ENCODE measurements at regions of chr1 and their contacts with region 1.

Region 1: DNA sequence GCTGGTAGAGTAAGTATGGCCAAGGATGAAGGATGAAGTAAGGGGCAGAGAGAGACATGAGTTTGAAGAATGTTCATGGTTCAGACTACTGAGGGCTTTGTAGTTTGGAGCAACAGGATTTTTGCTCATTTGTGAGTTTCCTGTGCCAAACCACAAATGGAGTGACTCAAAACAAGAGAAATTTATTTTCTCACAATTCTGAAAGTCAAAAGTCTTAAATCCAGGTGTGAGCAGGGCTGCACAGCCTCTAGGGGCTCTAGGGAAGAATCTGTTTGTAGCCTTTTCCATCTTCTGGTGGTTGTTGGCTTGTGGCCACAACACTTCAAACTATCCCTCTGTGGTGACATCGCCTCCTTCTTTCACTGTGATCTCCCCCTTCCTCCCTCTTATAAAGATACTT is 58.9 kb downstream of the RHOU start:
- DNase-seq: peak; percentile 52
- H3K4me3 Mint-ChIP-seq: no peak overlapping the region
- H3K27ac Mint-ChIP-seq: no peak overlapping the region
- H3K4me1 Mint-ChIP-seq: peaks cover 9% of the 10 kb centered on the region
- H3K27me3 Mint-ChIP-seq: no peaks in the 10 kb centered on the region

Region 2: DNA sequence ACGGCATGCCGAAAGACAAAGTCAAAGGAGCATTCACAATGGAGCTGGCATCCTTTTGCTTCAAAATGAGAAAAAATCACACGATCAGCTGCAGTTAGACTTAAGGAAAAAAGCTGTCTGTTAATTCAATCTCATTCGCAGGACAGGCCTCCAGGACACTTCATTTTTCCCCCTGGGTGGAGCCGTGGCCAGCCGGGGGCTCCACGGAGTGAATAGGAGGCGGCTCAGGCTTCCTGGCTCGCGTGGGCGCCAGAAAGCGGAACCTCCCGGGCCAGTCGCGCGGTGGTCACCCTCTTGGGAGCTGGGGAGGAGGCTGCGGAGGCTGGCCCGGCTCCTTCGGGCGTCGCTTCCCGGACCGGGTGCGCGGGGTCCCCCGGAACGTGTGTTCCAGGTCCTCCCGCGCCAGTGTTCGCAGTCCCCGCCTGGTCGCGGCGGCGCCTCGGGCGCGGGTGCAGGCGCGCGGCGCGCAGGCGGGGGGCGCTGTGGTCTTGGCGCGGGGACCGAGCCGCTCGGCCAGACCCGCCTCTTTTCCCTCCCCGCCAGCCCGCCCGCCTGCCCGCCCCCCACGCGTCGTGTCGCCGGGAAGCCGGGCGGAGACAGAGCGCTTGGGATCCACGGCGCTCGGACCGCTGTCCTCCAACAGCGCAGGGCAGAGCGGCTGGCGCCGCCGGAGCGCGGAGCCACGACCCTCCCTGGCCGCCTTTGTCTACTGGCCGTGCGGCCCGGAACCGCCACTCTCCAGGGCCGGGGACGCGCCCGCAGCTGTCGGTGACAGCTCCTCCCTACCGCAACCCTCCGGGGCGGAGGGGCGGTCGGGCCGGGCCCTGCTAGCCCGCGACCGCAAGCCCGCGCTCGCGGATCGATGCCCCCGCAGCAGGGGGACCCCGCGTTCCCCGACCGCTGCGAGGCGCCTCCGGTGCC is 59.0 kb before region 1 on chr1 and contains the start of gene RHOU:
- CTCF ChIA-PET with region 1: interaction called, 10 read pairs
- POLR2A ChIA-PET with region 1: no interaction called
- intact Hi-C with region 1: loop called (anchors 1 kb)
- DNase-seq: peak; percentile 74
- H3K4me3 Mint-ChIP-seq: peak within 1 kb of the TSS; percentile 77
- H3K27ac Mint-ChIP-seq: no peak within 1 kb of the TSS
- H3K4me1 Mint-ChIP-seq: peaks cover 20% of the 10 kb centered on the region
- H3K27me3 Mint-ChIP-seq: peaks cover 9% of the 10 kb centered on the region
- total RNA-seq, gene RHOU: 0.57 to 0.68 TPM

Region 3: DNA sequence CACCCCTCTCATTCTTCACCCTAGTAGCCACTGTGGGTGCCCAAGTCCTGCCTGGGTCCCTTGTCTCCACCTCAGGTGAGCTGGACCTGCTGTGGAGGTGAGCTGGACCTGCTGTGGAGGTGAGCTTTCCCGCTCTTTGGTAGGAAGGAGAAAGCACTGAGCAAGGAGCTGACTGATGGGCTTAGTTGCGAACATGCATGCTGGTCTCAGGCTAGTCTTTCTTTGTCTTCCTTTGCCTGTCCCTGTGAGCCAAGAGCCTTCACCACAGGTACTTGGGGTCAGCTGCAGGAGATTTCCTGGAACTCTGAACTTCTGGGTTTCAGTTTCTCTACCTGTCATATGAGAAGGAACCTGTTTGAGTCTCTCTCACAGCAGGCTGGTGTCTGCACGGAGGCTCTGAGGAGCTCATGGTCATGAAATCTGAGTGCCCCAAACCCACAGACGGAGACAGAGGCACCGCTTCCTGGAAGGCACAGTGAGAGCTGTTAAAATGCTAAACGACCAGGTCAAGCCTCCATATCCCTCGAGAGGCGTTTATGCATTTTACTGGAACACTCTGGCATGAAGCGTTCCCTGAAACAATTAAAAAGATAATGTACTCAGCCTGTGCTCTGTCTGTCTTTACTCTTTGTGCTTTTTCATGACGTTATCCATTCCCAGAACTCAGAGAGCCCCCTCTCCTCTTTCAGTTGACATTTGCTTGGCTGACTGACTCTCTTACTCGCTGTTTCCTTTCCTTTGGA is 10.7 kb after region 1 on chr1:
- CTCF ChIA-PET with region 1: interaction called, 8 read pairs
- POLR2A ChIA-PET with region 1: interaction called, 11 read pairs
- intact Hi-C with region 1: loop called (anchors 1 kb)
- DNase-seq: peak; percentile 78
- H3K4me3 Mint-ChIP-seq: peak overlapping the region; percentile 20
- H3K27ac Mint-ChIP-seq: peak overlapping the region; percentile 86
- H3K4me1 Mint-ChIP-seq: peaks cover 32% of the 10 kb centered on the region
- H3K27me3 Mint-ChIP-seq: peaks cover 2% of the 10 kb centered on the region

Region 4: DNA sequence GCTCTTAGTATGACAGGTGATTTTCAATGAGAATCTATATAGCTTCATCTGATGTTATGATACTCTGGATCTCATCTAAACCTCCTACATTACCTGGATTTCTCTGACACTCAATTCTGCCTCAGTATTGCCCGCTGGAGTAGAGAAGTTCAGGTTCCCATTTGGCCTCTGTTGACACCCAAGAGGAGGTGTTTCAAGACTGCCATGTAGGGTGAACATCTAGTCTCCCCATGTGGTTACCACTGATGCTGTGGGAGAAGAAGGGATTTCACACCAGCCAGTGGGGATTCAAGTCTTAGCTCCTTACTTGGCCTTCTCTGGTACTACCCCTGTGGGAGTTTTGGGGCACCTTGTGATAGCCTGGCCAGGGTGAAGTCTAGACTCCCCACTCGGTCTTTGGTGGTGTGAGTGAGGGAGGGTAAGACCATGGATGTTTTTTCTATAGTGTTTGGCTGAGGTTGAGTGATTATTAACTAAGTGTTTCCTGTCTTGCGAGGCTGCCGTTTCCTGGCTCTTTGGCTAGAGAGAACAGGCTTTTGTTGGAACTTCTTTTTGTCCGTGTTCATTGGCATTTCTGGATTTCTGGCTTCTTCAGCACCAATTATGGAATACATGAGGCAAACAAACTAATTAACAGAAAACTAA is 31.8 kb after region 1 on chr1:
- CTCF ChIA-PET with region 1: interaction called, 3 read pairs
- POLR2A ChIA-PET with region 1: no interaction called
- intact Hi-C with region 1: loop called (anchors 2 kb)
- DNase-seq: no peak
- H3K4me3 Mint-ChIP-seq: no peak overlapping the region
- H3K27ac Mint-ChIP-seq: no peak overlapping the region
- H3K4me1 Mint-ChIP-seq: peaks cover 25% of the 10 kb centered on the region
- H3K27me3 Mint-ChIP-seq: peaks cover 4% of the 10 kb centered on the region

Region 5: GRCh38 chr1:228921481-228921880 is 127.3 kb after region 1 on chr1:
- CTCF ChIA-PET with region 1: no interaction called
- POLR2A ChIA-PET with region 1: no interaction called
- intact Hi-C with region 1: loop called (anchors 10 kb)
- DNase-seq: no peak
- H3K4me3 Mint-ChIP-seq: no peak overlapping the region
- H3K27ac Mint-ChIP-seq: no peak overlapping the region
- H3K4me1 Mint-ChIP-seq: no peaks in the 10 kb centered on the region
- H3K27me3 Mint-ChIP-seq: no peaks in the 10 kb centered on the region

Region 6: DNA sequence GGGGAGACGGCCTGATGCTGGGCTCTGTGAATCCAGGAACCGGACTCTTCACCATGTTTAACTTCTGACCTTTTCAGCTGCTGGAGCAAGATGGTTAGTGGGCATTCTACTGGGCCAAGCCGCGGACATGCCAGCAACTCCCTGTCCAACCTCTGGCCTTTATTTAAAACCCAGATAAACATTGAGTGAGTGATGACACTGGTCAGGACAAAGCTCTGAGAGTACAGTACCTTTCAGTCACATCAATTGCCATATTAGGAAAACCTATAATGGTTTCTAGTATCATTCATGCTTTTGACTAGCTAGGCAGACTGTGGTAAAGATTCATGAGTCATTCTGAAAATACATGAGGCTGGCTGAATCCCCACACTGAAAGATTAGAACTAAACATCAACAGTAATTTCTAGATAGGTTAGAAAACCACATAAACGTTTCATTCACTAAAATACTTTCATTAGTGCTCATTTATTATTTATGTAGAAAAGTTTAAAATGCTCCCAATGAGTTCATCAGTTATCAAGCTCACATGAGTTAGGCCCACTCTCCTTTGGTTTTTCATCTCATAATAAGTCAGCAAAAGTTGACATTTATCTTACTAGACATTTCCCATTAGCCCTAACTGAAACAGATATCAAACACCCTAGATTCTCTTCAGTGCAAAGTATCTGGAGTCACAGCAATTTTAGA is 646.8 kb after region 1 on chr1:
- CTCF ChIA-PET with region 1: no interaction called
- POLR2A ChIA-PET with region 1: no interaction called
- intact Hi-C with region 1: loop called (anchors 5 kb)
- DNase-seq: no peak
- H3K4me3 Mint-ChIP-seq: no peak overlapping the region
- H3K27ac Mint-ChIP-seq: peak overlapping the region; percentile 56
- H3K4me1 Mint-ChIP-seq: peaks cover 22% of the 10 kb centered on the region
- H3K27me3 Mint-ChIP-seq: peaks cover 17% of the 10 kb centered on the region